Activated CD8-positive, alpha-beta T cell treated with anti-CD3 and anti-CD28 coated beads, Interleukin-2, amount 10 ng/mL, durations not matched to agents 7 days and 5 days (primary cell): ENCODE measurements at regions of chr16 and their contacts with region 1.

Region 1: DNA sequence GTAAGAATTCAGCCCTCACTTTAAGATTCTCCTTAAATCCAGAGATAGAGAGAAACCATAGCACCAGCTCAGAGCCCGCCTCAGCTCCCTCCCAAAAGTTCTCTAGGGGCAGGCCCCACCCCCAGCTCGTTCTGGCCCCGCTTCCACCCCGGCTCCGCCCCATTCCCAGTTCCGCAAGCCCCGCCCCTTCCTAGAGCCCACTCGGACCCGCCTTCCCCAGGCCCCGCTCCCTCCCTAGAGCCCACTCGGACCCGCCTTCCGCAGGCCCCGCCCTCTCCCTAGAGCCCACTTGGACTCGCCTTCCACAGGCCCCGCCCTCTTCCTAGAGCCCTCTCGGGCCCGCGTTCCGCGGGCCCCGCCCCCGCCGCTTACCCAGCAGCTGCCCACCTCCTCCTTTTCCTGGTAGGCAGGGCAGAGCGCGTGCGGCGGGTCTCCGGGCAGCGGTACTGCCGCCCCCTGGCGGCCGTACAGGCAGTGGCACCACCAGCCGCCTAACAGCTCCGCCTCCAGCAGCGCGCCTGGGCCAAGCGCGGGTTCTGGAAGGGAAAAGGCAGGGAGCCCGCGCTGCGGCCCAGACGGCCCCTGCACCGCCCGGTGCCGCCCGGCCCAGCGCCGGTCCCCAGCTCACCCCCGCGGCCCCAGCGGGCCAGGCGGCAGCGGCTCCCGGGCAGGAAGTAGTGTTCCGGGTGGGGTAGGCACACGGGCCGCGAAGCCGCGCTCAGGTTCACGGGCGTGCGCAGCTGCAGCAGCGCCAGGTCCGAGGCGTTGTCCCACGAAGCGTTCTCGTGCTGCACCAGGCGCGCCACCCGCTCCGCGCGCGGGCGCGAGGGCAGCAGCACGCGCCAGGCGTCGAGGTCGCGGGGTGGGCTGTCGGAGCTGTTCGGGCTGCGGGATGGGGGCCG is 6.8 kb upstream of the PRSS8 start:
- DNase-seq: peak; percentile 99
- ATAC-seq: peak; percentile 94
- H3K4me3 Mint-ChIP-seq: peak overlapping the region; percentile 74
- H3K27ac Mint-ChIP-seq: peak overlapping the region; percentile 85
- H3K4me1 Mint-ChIP-seq: peaks cover 17% of the 10 kb centered on the region
- H3K27me3 Mint-ChIP-seq: peaks cover 6% of the 10 kb centered on the region

Region 2: DNA sequence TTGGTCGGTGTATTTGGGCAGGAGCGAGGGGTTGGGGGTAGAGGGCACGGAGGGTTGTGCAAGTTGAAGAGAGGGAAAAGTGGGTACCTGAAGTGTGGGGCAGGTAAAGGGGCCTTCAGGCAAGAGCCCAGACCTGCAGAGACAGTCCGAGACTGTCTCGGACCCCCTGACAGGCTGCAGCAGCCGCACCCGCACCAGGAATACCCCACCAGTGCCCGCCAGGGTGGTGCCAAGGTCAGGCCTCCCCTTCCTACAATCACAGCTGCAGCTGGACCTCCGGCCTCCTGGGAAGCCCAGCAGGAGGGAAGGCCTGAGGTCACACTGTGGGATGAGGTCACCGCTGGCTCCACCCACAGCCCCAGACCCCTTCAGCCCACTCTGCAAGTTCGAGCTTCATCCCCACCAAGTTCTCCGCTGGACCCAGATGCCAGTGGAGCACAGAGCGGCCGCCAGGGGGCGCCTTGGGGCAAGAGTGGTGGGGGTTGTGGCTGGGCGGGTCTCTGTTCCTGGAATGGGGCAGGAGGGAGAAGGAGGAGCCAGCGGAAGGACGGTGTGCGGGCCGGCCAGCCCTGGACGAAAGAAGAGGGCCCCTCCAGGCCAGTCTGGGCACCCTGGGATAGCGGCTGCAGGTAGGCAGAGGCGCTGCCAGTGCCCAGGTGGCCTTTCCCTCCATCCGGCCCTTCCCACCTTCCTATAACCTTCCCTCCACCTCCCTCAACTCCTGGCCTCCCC is 157.5 kb before region 1 on chr16 and contains the start of gene HSD3B7:
- CTCF ChIA-PET with region 1: interaction called, 29 read pairs
- POLR2A ChIA-PET with region 1: no interaction called
- DNase-seq: peak; percentile 85
- ATAC-seq: peak; percentile 80
- H3K4me3 Mint-ChIP-seq: peak within 1 kb of the TSS; percentile 52
- H3K27ac Mint-ChIP-seq: peak within 1 kb of the TSS; percentile 43
- H3K4me1 Mint-ChIP-seq: peaks cover 15% of the 10 kb centered on the region
- H3K27me3 Mint-ChIP-seq: no peaks in the 10 kb centered on the region
- total RNA-seq, gene HSD3B7: 6.3 to 7.8 TPM

Region 3: GRCh38 chr16:31094424-31095120 is 47.8 kb before region 1 on chr16 and contains the start of gene VKORC1:
- CTCF ChIA-PET with region 1: interaction called, 17 read pairs
- POLR2A ChIA-PET with region 1: interaction called, 5 read pairs
- DNase-seq: peak; percentile 93
- ATAC-seq: peak; percentile 95
- H3K4me3 Mint-ChIP-seq: peak within 1 kb of the TSS; percentile 95
- H3K27ac Mint-ChIP-seq: peak within 1 kb of the TSS; percentile 94
- H3K4me1 Mint-ChIP-seq: peaks cover 34% of the 10 kb centered on the region
- H3K27me3 Mint-ChIP-seq: peaks cover 3% of the 10 kb centered on the region
- total RNA-seq, gene VKORC1: 71.6 to 78.8 TPM

Region 4: GRCh38 chr16:31117391-31118197 is 24.8 kb before region 1 on chr16 and contains the start of gene KAT8:
- CTCF ChIA-PET with region 1: interaction called, 53 read pairs
- POLR2A ChIA-PET with region 1: interaction called, 10 read pairs
- DNase-seq: peak; percentile 99
- ATAC-seq: peak; percentile 95
- H3K4me3 Mint-ChIP-seq: peak within 1 kb of the TSS; percentile 85
- H3K27ac Mint-ChIP-seq: peak within 1 kb of the TSS; percentile 87
- H3K4me1 Mint-ChIP-seq: peaks cover 26% of the 10 kb centered on the region
- H3K27me3 Mint-ChIP-seq: no peaks in the 10 kb centered on the region
- total RNA-seq, gene KAT8: 58.6 to 63.8 TPM

Region 5: GRCh38 chr16:31157136-31157535 is 14.8 kb after region 1 on chr16:
- CTCF ChIA-PET with region 1: interaction called, 71 read pairs
- POLR2A ChIA-PET with region 1: no interaction called
- DNase-seq: no peak
- ATAC-seq: no peak
- H3K4me3 Mint-ChIP-seq: peak overlapping the region; percentile 1
- H3K27ac Mint-ChIP-seq: no peak overlapping the region
- H3K4me1 Mint-ChIP-seq: peaks cover 12% of the 10 kb centered on the region
- H3K27me3 Mint-ChIP-seq: peaks cover 11% of the 10 kb centered on the region

Region 6: GRCh38 chr16:31487720-31488467 is 345.5 kb after region 1 on chr16:
- CTCF ChIA-PET with region 1: no interaction called
- POLR2A ChIA-PET with region 1: no interaction called
- DNase-seq: peak; percentile 72
- ATAC-seq: peak; percentile 96
- H3K4me3 Mint-ChIP-seq: peak overlapping the region; percentile 79
- H3K27ac Mint-ChIP-seq: peak overlapping the region; percentile 69
- H3K4me1 Mint-ChIP-seq: peaks cover 11% of the 10 kb centered on the region
- H3K27me3 Mint-ChIP-seq: peaks cover 8% of the 10 kb centered on the region